CD8-positive, alpha-beta T cell (primary cell): ENCODE measurements at regions of chr2 and their contacts with region 1.

Region 1: GRCh38 chr2:189302274-189302948 is 122.8 kb upstream of the COL5A2 start:
- DNase-seq: no peak
- ATAC-seq: no peak
- H3K4me3 ChIP-seq: no peak overlapping the region
- H3K4me3 Mint-ChIP-seq: peak overlapping the region; percentile 19
- H3K27ac ChIP-seq: no peak overlapping the region
- H3K27ac Mint-ChIP-seq: peak overlapping the region; percentile 32
- H3K4me1 ChIP-seq: peaks cover 80% of the 10 kb centered on the region
- H3K4me1 Mint-ChIP-seq: peaks cover 87% of the 10 kb centered on the region
- H3K27me3 ChIP-seq: no peaks in the 10 kb centered on the region
- H3K27me3 Mint-ChIP-seq: no peaks in the 10 kb centered on the region
- CTCF ChIP-seq: no peak

Region 2: GRCh38 chr2:189287982-189288521 is 14.4 kb before region 1 on chr2:
- CTCF ChIA-PET with region 1: interaction called, 4 read pairs
- POLR2A ChIA-PET with region 1: no interaction called
- intact Hi-C with region 1: loop called in 1 of 2 experiments (anchors 2 kb)
- DNase-seq: peak in 2 of 9 experiments; percentile 33 to 40
- ATAC-seq: no peak
- H3K4me3 ChIP-seq: no peak overlapping the region
- H3K4me3 Mint-ChIP-seq: no peak overlapping the region
- H3K27ac ChIP-seq: no peak overlapping the region
- H3K27ac Mint-ChIP-seq: no peak overlapping the region
- H3K4me1 ChIP-seq: peaks cover 4% of the 10 kb centered on the region
- H3K4me1 Mint-ChIP-seq: peaks cover 11% of the 10 kb centered on the region
- H3K27me3 ChIP-seq: no peaks in the 10 kb centered on the region
- H3K27me3 Mint-ChIP-seq: no peaks in the 10 kb centered on the region
- CTCF ChIP-seq: peak; percentile 41

Region 3: DNA sequence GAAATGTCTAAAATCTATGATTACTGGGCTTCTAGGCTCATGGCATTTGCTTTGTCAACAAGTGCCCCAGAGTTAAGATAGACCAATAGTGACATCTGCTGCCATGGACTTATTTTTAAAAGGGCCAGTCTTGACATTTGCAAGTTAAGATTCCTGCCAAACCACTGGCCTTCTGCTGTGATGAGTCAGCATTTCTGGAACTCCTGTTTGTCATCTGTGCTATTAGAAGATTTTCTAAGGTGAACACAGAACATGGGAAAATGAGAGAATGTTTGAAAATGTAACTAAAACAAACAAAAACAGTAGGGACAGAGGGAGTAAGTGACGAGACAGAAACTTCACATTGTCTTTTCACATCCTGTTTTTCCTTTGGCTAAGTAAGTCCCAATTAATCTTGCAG is 45.1 kb after region 1 on chr2:
- CTCF ChIA-PET with region 1: no interaction called
- POLR2A ChIA-PET with region 1: no interaction called
- intact Hi-C with region 1: loop called in 1 of 2 experiments (anchors 5 kb)
- DNase-seq: peak in 3 of 9 experiments; percentile 9 to 61 (median 52)
- ATAC-seq: peak; percentile 38
- H3K4me3 ChIP-seq: no peak overlapping the region
- H3K4me3 Mint-ChIP-seq: no peak overlapping the region
- H3K27ac ChIP-seq: no peak overlapping the region
- H3K27ac Mint-ChIP-seq: no peak overlapping the region
- H3K4me1 ChIP-seq: peaks cover 3% of the 10 kb centered on the region
- H3K4me1 Mint-ChIP-seq: peaks cover 16% of the 10 kb centered on the region
- H3K27me3 ChIP-seq: no peaks in the 10 kb centered on the region
- H3K27me3 Mint-ChIP-seq: no peaks in the 10 kb centered on the region
- CTCF ChIP-seq: peak; percentile 33